Posterior cingulate gyrus (tissue), 11 donors: ENCODE measurements at regions of chr1 and their contacts with region 1.

Region 1: GRCh38 chr1:983799-984473 is 2.0 kb upstream of the PERM1 start:
- DNase-seq: peak in 4 of 10 donors; percentile 50 to 92 (median 64)

Region 2: DNA sequence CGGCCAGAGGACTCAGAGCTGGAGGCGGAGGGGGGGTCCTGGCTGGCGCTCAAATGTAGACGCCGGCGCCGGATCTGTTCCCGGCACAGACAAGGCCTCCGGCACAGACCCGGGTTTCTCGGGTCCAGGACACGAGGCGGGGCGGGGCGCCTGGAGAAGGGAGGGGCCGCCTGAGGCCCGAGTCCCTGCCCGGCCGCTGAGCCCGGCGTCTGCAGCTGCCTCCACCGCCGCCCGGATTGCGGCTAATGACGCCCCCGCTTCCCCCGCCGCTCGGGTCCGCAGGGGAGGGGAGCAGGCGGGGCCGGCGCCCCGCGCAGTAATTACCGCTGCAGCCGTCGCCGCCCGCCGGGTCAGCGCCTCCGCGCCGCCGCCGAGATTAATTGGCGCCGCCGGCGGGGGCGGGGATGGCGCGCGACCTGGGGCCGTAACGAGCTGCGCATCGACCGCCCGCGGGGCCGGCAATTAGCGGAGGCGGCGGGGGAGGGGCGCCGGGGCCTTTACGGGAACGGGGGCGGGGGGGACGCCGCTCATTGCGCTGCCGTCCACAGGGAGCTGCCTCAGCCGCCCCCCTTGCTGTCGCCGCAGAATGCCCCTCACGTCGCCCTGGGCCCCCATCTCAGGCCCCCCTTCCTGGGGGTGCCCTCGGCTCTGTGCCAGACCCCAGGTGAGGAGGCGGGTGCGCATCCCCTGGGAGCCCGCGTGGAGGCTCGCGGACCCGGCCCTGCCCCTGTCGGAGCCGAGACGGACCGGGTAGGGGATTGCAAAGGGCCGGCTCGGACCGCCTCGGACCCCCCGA is 42.1 kb before region 1 on chr1:
- intact Hi-C with region 1: no loop called
- DNase-seq: peak in 1 of 10 donors; percentile 39

Region 3: GRCh38 chr1:1019122-1019999 is 35.4 kb after region 1 on chr1:
- intact Hi-C with region 1: no loop called
- DNase-seq: peak; percentile 61 to 97 (median 76)

Region 4: DNA sequence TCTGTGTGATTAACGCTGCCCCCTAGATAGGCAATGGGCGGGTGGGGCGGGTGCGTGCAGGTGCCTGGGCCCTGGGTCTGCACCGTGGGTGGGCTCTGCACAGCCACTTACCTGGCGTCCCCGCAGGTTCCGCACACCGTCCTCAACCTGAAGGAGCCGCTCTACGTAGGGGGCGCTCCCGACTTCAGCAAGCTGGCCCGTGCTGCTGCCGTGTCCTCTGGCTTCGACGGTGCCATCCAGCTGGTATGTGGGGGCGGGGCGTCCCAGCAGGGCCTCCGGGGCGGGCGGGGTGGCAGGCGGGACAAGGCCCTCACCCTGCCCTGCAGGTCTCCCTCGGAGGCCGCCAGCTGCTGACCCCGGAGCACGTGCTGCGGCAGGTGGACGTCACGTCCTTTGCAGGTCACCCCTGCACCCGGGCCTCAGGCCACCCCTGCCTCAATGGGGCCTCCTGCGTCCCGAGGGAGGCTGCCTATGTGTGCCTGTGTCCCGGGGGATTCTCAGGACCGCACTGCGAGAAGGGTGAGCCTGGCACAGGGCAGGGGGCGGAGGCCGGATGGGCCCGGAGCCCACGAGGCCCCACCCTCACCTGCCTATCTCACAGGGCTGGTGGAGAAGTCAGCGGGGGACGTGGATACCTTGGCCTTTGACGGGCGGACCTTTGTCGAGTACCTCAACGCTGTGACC is 67.3 kb after region 1 on chr1:
- intact Hi-C with region 1: no loop called
- DNase-seq: no peak

Region 5: GRCh38 chr1:1063945-1064831 is 80.3 kb after region 1 on chr1:
- intact Hi-C with region 1: loop called (anchors 2 kb)
- DNase-seq: peak in 5 of 10 donors; percentile 41 to 92 (median 52)